Ovary (tissue), 10 donors: ENCODE measurements at regions of chr17 and their contacts with region 1.

Region 1: GRCh38 chr17:40791787-40792436 is 7.8 kb downstream of the KRT28 start:
- DNase-seq: no peak
- H3K4me3 ChIP-seq: no peak overlapping the region
- H3K27ac ChIP-seq: no peak overlapping the region
- H3K4me1 ChIP-seq: peaks cover 1% of the 10 kb centered on the region
- H3K27me3 ChIP-seq: no peaks in the 10 kb centered on the region
- CTCF ChIP-seq: peak in 2 of 3 donors; percentile 21 to 49
- EP300 ChIP-seq: no peak
- POLR2A ChIP-seq: no peak

Region 2: DNA sequence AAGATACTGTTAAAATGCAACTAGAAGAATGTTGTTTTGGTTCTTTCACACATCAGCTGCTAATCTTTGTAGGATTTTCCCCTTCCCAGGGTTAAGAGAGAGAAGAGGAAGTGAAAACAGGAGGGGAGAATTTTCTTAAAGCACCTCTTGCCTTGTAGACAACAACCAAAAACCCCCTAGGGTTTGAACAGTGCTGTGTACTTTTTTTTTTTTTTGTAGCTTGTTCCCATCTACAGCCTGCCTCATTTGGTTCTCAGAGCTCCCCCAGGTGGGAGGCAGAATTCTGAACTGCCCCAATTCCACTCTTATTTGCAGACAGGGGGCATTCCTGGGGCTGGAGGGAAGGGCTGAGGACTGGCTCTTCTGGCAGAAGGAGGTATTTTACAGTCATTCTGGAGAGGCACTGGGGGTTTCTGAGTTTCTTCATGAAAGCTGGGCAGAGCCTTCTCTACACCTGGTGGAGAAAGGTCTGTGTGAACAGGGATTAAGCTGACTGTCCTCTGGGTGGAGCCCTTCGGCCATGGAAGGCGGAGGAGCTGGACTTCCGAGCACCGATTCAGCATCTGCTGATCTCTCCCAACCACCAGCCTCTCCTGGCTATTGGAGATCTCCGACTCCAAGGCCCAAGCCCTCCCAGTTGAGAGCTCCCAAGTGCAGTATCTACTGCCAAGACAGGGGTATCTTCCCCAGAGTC is 176.5 kb before region 1 on chr17:
- intact Hi-C with region 1: loop called in 2 of 4 experiments (anchors 5 to 10 kb)
- DNase-seq: peak; percentile 45 to 72 (median 59)
- H3K4me3 ChIP-seq: no peak overlapping the region
- H3K27ac ChIP-seq: no peak overlapping the region
- H3K4me1 ChIP-seq: peaks cover 9% of the 10 kb centered on the region
- H3K27me3 ChIP-seq: no peaks in the 10 kb centered on the region
- CTCF ChIP-seq: peak in 2 of 3 donors; percentile 31 to 33
- EP300 ChIP-seq: no peak
- POLR2A ChIP-seq: no peak

Region 3: GRCh38 chr17:40622509-40622928 is 169.4 kb before region 1 on chr17:
- intact Hi-C with region 1: loop called in 2 of 4 experiments (anchors 5 to 10 kb)
- DNase-seq: no peak
- H3K4me3 ChIP-seq: no peak overlapping the region
- H3K27ac ChIP-seq: no peak overlapping the region
- H3K4me1 ChIP-seq: peaks cover 2% of the 10 kb centered on the region
- H3K27me3 ChIP-seq: no peaks in the 10 kb centered on the region
- CTCF ChIP-seq: no peak
- EP300 ChIP-seq: no peak
- POLR2A ChIP-seq: no peak

Region 4: DNA sequence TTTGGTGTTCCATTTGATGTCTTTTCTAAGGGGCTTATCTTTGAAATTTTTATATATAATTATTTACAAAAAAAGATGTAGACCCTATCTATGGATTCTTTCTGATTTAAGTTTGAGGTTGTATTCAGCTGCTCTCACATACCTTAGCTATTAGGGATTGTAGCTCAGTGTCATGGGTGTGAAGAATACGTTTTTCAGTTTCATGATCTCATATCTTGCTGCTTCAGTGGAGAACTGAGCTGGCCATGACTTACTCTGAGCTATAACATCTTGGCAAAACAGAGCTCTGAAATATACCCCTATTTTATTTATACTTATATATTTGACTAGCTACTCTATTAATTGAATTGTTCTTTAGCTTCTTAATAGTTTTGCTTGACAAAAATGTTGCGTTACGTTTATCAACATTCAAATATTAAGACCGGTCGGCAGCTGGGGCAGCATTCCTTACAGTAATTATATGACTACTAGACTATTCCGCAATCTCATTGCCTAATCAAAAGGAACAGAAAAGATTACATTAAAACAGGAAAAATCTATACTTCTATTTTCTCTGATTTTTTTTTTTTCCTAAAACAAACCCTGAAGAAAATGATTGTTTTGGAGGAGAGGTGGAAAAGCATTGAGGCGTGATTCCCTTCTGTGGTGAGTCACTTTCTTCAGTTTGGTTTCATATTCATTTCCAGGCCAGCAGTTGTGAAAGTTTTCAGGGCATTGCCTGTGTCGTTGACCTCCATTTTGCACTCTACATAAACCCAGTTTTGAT is 64.3 kb before region 1 on chr17:
- intact Hi-C with region 1: no loop called
- DNase-seq: peak in 1 of 5 donors; percentile 23
- H3K4me3 ChIP-seq: no peak overlapping the region
- H3K27ac ChIP-seq: no peak overlapping the region
- H3K4me1 ChIP-seq: no peaks in the 10 kb centered on the region
- H3K27me3 ChIP-seq: no peaks in the 10 kb centered on the region
- CTCF ChIP-seq: no peak
- EP300 ChIP-seq: no peak
- POLR2A ChIP-seq: no peak

Region 5: DNA sequence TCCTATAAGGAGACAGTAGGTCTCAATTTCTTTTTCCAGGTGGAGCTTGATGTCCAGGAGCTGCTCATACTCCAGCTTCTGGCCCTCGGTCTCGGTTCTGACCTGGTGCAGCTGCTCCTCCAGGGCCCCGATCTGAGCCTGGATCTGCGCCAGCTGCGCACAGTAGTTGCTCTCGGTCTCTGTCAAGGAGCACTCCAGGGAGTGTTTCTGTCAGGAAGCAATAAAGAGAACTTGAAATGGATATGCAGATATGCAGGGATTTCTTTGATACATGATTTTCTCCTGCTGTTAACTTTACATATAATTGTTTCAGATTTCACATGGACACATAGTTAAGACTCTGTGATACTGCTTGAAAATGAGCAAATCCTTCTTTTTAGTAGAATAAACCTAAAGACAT is 41.5 kb before region 1 on chr17:
- intact Hi-C with region 1: no loop called
- DNase-seq: no peak
- H3K4me3 ChIP-seq: no peak overlapping the region
- H3K27ac ChIP-seq: no peak overlapping the region
- H3K4me1 ChIP-seq: no peaks in the 10 kb centered on the region
- H3K27me3 ChIP-seq: no peaks in the 10 kb centered on the region
- CTCF ChIP-seq: no peak
- EP300 ChIP-seq: no peak
- POLR2A ChIP-seq: no peak